ENCODE measurements at regions of chr6 and their contacts with region 1.

Region 1: GRCh38 chr6:133973109-133973971 is 20.3 kb downstream of the TBPL1 start:
- DNase-seq: no peak
- H3K4me3 ChIP-seq: no peak overlapping the region
- H3K27me3 ChIP-seq: no peaks in the 10 kb centered on the region
- CTCF ChIP-seq: peak; percentile 62

Region 2: GRCh38 chr6:133577851-133578250 is 395.5 kb before region 1 on chr6:
- CTCF ChIA-PET with region 1: no interaction called
- POLR2A ChIA-PET with region 1: no interaction called
- DNase-seq: no peak
- H3K4me3 ChIP-seq: no peak overlapping the region
- H3K27me3 ChIP-seq: no peaks in the 10 kb centered on the region
- CTCF ChIP-seq: no peak

Region 3: GRCh38 chr6:133952815-133953633 is 20.3 kb before region 1 on chr6 and contains the start of gene TBPL1:
- CTCF ChIA-PET with region 1: interaction called, 15 read pairs
- POLR2A ChIA-PET with region 1: no interaction called
- DNase-seq: peak; percentile 70
- H3K4me3 ChIP-seq: peak within 1 kb of the TSS; percentile 92
- H3K27me3 ChIP-seq: no peaks in the 10 kb centered on the region
- CTCF ChIP-seq: no peak
- polyA plus RNA-seq, gene TBPL1: 36.2 and 37.0 TPM in 2 replicates

Region 4: GRCh38 chr6:133997336-133997666 is 24.0 kb after region 1 on chr6:
- CTCF ChIA-PET with region 1: no interaction called
- POLR2A ChIA-PET with region 1: no interaction called
- DNase-seq: no peak
- H3K4me3 ChIP-seq: no peak overlapping the region
- H3K27me3 ChIP-seq: no peaks in the 10 kb centered on the region
- CTCF ChIP-seq: no peak

Measured in BJ (cell line).